Thyroid gland (tissue), 4 donors: ENCODE measurements at regions of chr4 and their contacts with region 1.

Region 1: GRCh38 chr4:2220016-2220630 is 21.8 kb downstream of the HAUS3 start:
- DNase-seq: peak; percentile 88 to 90
- H3K4me3 ChIP-seq: no peak overlapping the region
- H3K27ac ChIP-seq: no peak overlapping the region
- H3K4me1 ChIP-seq: peaks cover 0 to 4% of the 10 kb centered on the region in 2 donors
- H3K27me3 ChIP-seq: no peaks in the 10 kb centered on the region
- CTCF ChIP-seq: peak; percentile 57 to 92 (median 86)
- POLR2A ChIP-seq: no peak

Region 2: DNA sequence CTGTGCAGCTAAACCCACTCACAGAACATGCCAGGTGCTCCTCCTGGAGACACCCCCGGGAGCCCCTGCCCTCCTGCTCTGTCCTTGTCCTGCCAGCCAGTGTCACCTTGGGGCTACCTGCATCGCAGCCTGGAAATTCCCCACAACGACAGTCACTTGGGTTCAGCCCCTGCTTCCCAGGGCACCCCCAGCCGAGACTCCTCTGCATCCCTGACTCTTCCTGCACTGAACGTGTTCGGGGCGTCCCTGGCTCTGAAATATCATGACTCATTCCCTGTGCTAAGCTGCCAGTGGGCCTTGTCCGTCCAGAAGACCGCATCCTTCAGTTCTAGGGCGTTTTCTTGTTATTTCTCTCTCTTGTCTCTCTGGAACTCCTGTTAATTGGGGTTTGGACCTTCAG is 204.5 kb after region 1 on chr4:
- intact Hi-C with region 1: loop called (anchors 10 kb)
- DNase-seq: no peak
- H3K4me3 ChIP-seq: no peak overlapping the region
- H3K27ac ChIP-seq: no peak overlapping the region
- H3K4me1 ChIP-seq: peaks cover 0 to 2% of the 10 kb centered on the region in 2 donors
- H3K27me3 ChIP-seq: no peaks in the 10 kb centered on the region
- CTCF ChIP-seq: no peak
- POLR2A ChIP-seq: no peak